HEK293T (cell line): ENCODE measurements at regions of chr17 and their contacts with region 1.

Region 1: GRCh38 chr17:47970704-47971463 is at the start of gene CDK5RAP3:
- DNase-seq: peak; percentile 99

Region 2: GRCh38 chr17:47941236-47941994 is 29.5 kb before region 1 on chr17 and contains the start of gene PNPO:
- CTCF ChIA-PET with region 1: interaction called, 12 read pairs
- POLR2A ChIA-PET with region 1: interaction called, 34 read pairs
- DNase-seq: peak; percentile 97

Region 3: GRCh38 chr17:47949136-47949759 is 21.6 kb before region 1 on chr17:
- CTCF ChIA-PET with region 1: interaction called, 12 read pairs
- POLR2A ChIA-PET with region 1: interaction called, 7 read pairs
- DNase-seq: peak; percentile 81

Region 4: GRCh38 chr17:47957591-47958428 is 13.1 kb before region 1 on chr17 and contains the start of gene PRR15L:
- CTCF ChIA-PET with region 1: interaction called, 11 read pairs
- POLR2A ChIA-PET with region 1: interaction called, 14 read pairs
- DNase-seq: no peak

Region 5: DNA sequence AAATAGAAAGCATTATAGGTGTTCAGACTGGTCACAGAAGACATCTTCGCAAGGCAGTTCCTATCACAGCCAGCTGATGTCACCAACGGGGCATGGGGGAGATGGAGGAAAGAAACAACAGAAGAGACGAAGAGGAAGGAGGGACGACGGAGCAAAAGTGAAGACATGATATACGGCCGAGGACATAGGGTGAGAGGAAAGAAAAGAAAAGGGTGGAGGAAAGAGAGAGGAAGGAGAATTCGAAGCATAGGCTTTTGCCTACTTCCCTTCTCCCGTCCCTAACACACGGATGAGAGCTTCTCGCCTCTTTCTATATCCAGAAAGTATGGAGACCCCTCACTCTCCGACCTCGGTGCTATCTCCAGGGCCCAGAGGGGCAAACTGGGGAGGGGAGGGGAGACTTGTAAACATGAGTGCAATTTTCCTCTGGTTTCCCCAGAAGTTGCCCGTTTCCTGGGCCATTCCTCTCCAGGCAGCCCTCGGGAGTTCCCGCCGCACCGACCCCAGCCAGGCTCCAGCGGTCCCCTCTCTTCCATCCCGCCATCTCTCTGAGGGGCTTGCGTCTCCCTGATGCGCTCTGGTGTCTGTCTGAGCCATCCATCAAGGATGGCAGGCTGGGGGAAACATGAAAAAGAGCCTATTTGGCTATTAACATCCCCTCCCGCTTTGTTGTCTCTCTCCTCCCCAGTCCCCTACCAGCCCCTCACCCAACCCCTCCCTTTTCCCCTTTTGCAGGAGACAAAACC is 40.7 kb after region 1 on chr17:
- CTCF ChIA-PET with region 1: interaction called, 6 read pairs
- POLR2A ChIA-PET with region 1: interaction called, 21 read pairs
- DNase-seq: peak; percentile 75